ENCODE measurements at regions of chr10 and their contacts with region 1.

Region 1: GRCh38 chr10:104268716-104269645 is at the start of gene GSTO2:
- DNase-seq: peak; percentile 100
- ATAC-seq: peak; percentile 91
- H3K4me3 Mint-ChIP-seq: peak within 1 kb of the TSS; percentile 93
- H3K27ac Mint-ChIP-seq: peak within 1 kb of the TSS; percentile 98
- H3K4me1 Mint-ChIP-seq: peaks cover 40% of the 10 kb centered on the region
- H3K27me3 Mint-ChIP-seq: no peaks in the 10 kb centered on the region
- CTCF ChIP-seq: no peak
- total RNA-seq, gene GSTO2: 1.8 to 2.7 TPM

Region 2: DNA sequence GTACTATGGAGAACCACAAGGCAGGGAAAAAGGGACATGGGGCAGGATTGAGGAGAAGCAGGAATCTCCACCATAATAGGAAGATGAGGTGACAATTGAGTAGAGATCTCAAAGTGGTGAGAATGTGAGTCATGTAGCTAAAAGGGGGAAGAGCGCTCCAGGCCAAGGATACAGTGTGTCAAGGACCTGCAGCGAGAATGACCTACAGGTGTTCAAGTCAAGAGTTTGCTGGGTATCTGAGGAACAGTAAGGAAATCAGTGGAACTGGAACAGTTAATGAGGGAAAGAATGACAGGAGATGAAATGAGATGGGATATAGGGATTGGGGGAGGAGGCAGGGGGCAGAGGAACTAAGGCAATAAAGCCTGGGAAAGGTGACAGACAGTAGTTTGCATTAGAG is 113.4 kb before region 1 on chr10:
- CTCF ChIA-PET with region 1: no interaction called
- POLR2A ChIA-PET with region 1: no interaction called
- intact Hi-C with region 1: no loop called
- DNase-seq: no peak
- ATAC-seq: no peak
- H3K4me3 Mint-ChIP-seq: no peak overlapping the region
- H3K27ac Mint-ChIP-seq: no peak overlapping the region
- H3K4me1 Mint-ChIP-seq: no peaks in the 10 kb centered on the region
- H3K27me3 Mint-ChIP-seq: peaks cover 34% of the 10 kb centered on the region
- CTCF ChIP-seq: no peak

Region 3: DNA sequence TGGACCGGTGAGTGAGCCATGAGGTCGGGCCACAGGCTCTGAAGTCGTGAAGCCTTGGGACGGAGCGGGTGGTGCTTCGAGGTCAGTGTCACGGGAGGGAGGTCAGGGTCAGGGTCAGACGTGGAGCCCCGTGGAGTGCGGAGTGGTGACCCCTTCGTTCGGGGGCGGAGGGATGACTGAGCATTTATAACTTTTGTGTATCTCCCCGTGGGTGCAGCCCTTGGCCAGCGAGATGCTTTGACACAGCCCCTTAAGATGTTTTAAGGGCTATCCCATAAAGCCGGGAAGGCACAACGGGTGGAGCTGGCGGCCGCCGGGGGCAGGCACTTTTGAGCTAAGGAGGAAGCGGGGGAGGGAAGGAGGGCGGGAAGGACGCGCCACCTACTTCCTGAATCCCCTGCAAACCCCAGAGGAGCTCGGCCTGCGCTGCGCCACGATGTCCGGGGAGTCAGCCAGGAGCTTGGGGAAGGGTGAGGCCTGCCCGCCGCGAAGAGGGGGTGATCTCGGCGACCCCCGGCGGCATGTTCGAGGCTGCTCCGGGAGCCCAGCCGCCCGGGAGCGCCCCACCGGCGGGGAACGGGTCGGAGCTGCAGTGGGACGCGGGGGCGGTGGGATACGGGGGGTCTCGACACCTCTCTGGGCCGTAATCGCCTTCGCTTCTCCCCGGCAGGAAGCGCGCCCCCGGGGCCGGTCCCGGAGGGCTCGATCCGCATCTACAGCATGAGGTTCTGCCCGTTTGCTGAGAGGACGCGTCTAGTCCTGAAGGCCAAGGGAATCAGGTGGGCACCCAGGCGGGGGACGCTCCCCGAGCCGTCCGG is 14.3 kb before region 1 on chr10 and contains the start of gene GSTO1:
- CTCF ChIA-PET with region 1: interaction called, 36 read pairs
- POLR2A ChIA-PET with region 1: interaction called, 74 read pairs
- intact Hi-C with region 1: loop called (anchors 2 kb)
- DNase-seq: peak; percentile 64
- ATAC-seq: peak; percentile 61
- H3K4me3 Mint-ChIP-seq: peak within 1 kb of the TSS; percentile 86
- H3K27ac Mint-ChIP-seq: peak within 1 kb of the TSS; percentile 96
- H3K4me1 Mint-ChIP-seq: peaks cover 48% of the 10 kb centered on the region
- H3K27me3 Mint-ChIP-seq: peaks cover 4% of the 10 kb centered on the region
- CTCF ChIP-seq: no peak
- total RNA-seq, gene GSTO1: 179 to 189 TPM

Region 4: GRCh38 chr10:104762793-104763192 is 493.8 kb after region 1 on chr10:
- CTCF ChIA-PET with region 1: no interaction called
- POLR2A ChIA-PET with region 1: no interaction called
- intact Hi-C with region 1: no loop called
- DNase-seq: no peak
- ATAC-seq: no peak
- H3K4me3 Mint-ChIP-seq: no peak overlapping the region
- H3K27ac Mint-ChIP-seq: no peak overlapping the region
- H3K4me1 Mint-ChIP-seq: no peaks in the 10 kb centered on the region
- H3K27me3 Mint-ChIP-seq: peaks cover 3% of the 10 kb centered on the region
- CTCF ChIP-seq: no peak

Measured in activated CD8-positive, alpha-beta T cell treated with anti-CD3 and anti-CD28 coated beads for 36 hours (primary cell).